Naive thymus-derived CD4-positive, alpha-beta T cell (primary cell): ENCODE measurements at regions of chr6 and their contacts with region 1.

Region 1: DNA sequence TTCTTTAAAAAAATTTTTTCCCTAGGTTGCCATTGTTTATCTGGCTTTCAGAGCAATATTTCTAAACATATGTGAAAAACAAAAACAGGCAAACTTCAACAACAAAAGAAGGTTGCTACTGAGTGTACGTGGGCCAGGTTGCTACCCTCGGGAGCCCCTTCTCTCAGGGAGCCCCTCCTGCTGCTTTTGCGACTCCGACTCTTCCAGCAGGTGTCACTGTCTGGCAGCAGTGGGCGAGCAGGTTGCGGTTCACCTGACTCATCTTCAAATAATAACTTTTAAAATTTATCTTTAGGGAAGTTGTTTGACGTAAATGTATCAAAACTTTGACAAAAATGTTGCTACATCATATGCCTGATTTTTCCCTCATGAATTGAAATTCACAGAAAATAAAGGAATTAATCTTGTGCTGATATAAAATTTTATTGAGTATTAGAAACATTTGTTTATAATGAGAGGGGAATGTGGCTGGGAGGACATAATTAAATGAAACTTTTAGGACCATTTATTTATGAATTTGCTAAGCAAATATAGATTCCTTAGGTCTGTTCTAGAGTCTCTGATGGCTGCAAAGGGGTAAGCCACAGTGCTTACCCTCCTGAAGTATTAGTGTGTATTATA is 138.8 kb downstream of the HIVEP1 start:
- DNase-seq: peak in 5 of 9 donors; percentile 16 to 45 (median 35)
- ATAC-seq: no peak
- H3K4me3 ChIP-seq: no peak overlapping the region
- H3K4me3 Mint-ChIP-seq: no peak overlapping the region
- H3K27ac ChIP-seq: no peak overlapping the region
- H3K27ac Mint-ChIP-seq: no peak overlapping the region
- H3K4me1 ChIP-seq: no peaks in the 10 kb centered on the region
- H3K4me1 Mint-ChIP-seq: peaks cover 4 to 29% (median 14%) of the 10 kb centered on the region in 7 donors
- H3K27me3 ChIP-seq: no peaks in the 10 kb centered on the region
- H3K27me3 Mint-ChIP-seq: no peaks in the 10 kb centered on the region

Region 2: DNA sequence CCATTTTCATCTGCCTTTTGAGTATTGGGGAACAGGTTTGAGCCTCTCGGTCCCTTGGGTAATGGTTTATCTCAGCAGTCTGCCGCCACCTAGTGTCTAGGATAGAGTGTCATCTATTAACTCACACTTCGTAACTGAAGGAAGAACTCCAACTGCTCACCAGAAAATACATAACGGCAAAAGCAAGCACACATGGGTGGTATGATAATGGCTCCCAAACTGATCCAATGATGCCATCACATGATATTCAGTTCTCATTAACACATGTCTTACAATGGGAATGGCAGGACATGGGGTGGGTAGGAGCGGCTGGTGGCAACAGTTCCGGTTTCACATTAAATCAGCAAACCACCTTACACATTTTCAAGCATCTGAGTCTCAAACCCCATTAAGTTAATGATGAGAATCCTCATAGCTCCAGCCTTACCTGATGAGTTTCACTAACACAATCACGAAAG is 455.0 kb after region 1 on chr6:
- CTCF ChIA-PET with region 1: no interaction called
- POLR2A ChIA-PET with region 1: no interaction called
- intact Hi-C with region 1: loop called in 1 of 2 experiments (anchors 5 kb)
- DNase-seq: peak in 5 of 9 donors; percentile 11 to 50 (median 27)
- ATAC-seq: peak; percentile 75
- H3K4me3 ChIP-seq: no peak overlapping the region
- H3K4me3 Mint-ChIP-seq: peak overlapping the region in 1 of 10 donors; percentile 49
- H3K27ac ChIP-seq: no peak overlapping the region
- H3K27ac Mint-ChIP-seq: no peak overlapping the region
- H3K4me1 ChIP-seq: no peaks in the 10 kb centered on the region
- H3K4me1 Mint-ChIP-seq: peaks cover 0 to 12% (median 0%) of the 10 kb centered on the region in 7 donors
- H3K27me3 ChIP-seq: no peaks in the 10 kb centered on the region
- H3K27me3 Mint-ChIP-seq: peaks cover 2 to 39% (median 32%) of the 10 kb centered on the region in 5 donors

Region 3: GRCh38 chr6:12890171-12890790 is 739.4 kb after region 1 on chr6:
- CTCF ChIA-PET with region 1: no interaction called
- POLR2A ChIA-PET with region 1: no interaction called
- intact Hi-C with region 1: loop called in 1 of 2 experiments (anchors 10 kb)
- DNase-seq: no peak
- ATAC-seq: no peak
- H3K4me3 ChIP-seq: no peak overlapping the region
- H3K4me3 Mint-ChIP-seq: no peak overlapping the region
- H3K27ac ChIP-seq: no peak overlapping the region
- H3K27ac Mint-ChIP-seq: no peak overlapping the region
- H3K4me1 ChIP-seq: no peaks in the 10 kb centered on the region
- H3K4me1 Mint-ChIP-seq: peaks cover 0 to 2% (median 0%) of the 10 kb centered on the region in 7 donors
- H3K27me3 ChIP-seq: peaks cover 0 to 4% of the 10 kb centered on the region in 2 donors
- H3K27me3 Mint-ChIP-seq: peaks cover 8 to 35% (median 20%) of the 10 kb centered on the region in 5 donors